Mammary epithelial cell (primary cell): ENCODE measurements at regions of chr17 and their contacts with region 1.

Region 1: GRCh38 chr17:47717261-47717697 is 15.8 kb upstream of the TBX21 start:
- DNase-seq: no peak
- H3K4me3 ChIP-seq: no peak overlapping the region
- H3K27ac ChIP-seq: no peak overlapping the region
- H3K4me1 ChIP-seq: peaks cover 8% of the 10 kb centered on the region
- H3K27me3 ChIP-seq: peaks cover 12% of the 10 kb centered on the region
- CTCF ChIP-seq: peak in 1 of 2 donors; percentile 17

Region 2: DNA sequence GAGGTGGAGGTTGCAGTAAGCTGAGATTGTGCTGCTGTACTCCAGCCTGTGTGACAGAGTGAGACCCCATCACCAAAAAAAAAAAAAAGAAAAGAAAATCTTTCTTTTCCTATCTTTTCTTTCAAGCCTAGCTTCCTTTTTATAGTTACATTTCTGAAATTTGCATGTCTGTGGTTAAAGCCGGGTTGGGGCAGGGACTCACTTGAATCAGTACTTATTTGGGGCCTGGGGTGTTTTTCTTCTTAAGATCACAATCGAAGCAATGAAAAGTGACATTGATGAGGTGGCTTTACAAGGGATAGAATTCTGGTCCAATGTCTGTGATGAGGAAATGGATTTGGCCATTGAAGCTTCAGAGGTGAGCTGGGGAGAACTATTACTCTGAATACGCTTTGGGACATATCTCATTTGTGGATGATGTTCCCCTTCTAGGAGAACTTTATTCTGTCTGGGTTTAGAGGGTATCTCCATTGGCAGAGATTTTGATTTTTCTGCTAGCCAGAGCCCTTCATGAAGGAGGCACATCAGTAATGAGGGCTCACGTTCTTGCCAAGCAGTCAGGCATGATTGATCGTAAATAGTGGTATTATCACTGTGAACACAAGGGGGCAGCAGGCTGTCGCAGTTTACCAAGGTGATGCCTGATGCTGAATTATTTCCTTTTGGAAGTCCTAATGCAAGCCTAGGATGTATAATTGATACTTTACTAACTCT is 53.2 kb before region 1 on chr17:
- CTCF ChIA-PET with region 1: no interaction called
- dilution Hi-C with region 1: loop called (anchors 5 kb)
- in situ Hi-C with region 1: no loop called
- intact Hi-C with region 1: no loop called
- DNase-seq: peak; percentile 34
- H3K4me3 ChIP-seq: no peak overlapping the region
- H3K27ac ChIP-seq: no peak overlapping the region
- H3K4me1 ChIP-seq: no peaks in the 10 kb centered on the region
- H3K27me3 ChIP-seq: no peaks in the 10 kb centered on the region
- CTCF ChIP-seq: peak; percentile 71 to 80

Region 3: GRCh38 chr17:47693734-47694580 is 23.3 kb before region 1 on chr17 and contains the start of gene TBKBP1:
- CTCF ChIA-PET with region 1: no interaction called
- dilution Hi-C with region 1: no loop called
- in situ Hi-C with region 1: no loop called
- intact Hi-C with region 1: no loop called
- DNase-seq: no peak
- H3K4me3 ChIP-seq: peak within 1 kb of the TSS; percentile 43 to 62 (median 51)
- H3K27ac ChIP-seq: no peak within 1 kb of the TSS
- H3K4me1 ChIP-seq: peaks cover 16% of the 10 kb centered on the region
- H3K27me3 ChIP-seq: no peaks in the 10 kb centered on the region
- CTCF ChIP-seq: no peak
- total RNA-seq, gene TBKBP1: 2.2 to 5.6 TPM